ENCODE measurements at regions of chr1 and their contacts with region 1.

Region 1: GRCh38 chr1:28602536-28603439 is 10.7 kb downstream of the RAB42 start:
- DNase-seq: peak in 1 of 2 donors; percentile 47
- H3K4me3 ChIP-seq: no peak overlapping the region
- H3K27ac ChIP-seq: no peak overlapping the region
- H3K4me1 ChIP-seq: no peaks in the 10 kb centered on the region
- H3K27me3 ChIP-seq: no peaks in the 10 kb centered on the region
- CTCF ChIP-seq: peak; percentile 20 to 74 (median 68)
- POLR2A ChIP-seq: no peak

Region 2: GRCh38 chr1:27928216-27928954 is 674.4 kb before region 1 on chr1:
- intact Hi-C with region 1: no loop called
- DNase-seq: no peak
- H3K4me3 ChIP-seq: no peak overlapping the region
- H3K27ac ChIP-seq: no peak overlapping the region
- H3K4me1 ChIP-seq: no peaks in the 10 kb centered on the region
- H3K27me3 ChIP-seq: no peaks in the 10 kb centered on the region
- CTCF ChIP-seq: no peak
- POLR2A ChIP-seq: no peak

Region 3: DNA sequence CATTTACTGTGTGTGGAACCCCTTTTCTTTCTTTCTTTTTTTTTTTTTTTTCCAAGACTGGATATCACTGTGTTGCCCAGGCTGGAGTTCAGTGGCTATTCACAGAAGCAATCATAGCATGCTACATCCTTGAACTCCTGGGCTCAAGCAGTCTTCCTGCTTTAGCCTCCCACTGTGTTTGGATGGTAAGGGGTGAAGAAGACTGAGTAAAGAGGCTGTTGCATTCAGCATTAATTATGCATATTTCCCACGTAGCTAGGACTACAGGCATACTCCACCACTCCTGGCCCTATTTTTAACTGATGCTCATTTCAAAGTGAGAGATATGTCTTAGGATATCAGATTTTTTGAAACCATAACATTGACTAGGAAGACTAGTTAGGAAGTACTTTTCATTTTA is 193.7 kb before region 1 on chr1:
- intact Hi-C with region 1: loop called (anchors 10 kb)
- DNase-seq: no peak
- H3K4me3 ChIP-seq: no peak overlapping the region
- H3K27ac ChIP-seq: no peak overlapping the region
- H3K4me1 ChIP-seq: no peaks in the 10 kb centered on the region
- H3K27me3 ChIP-seq: no peaks in the 10 kb centered on the region
- CTCF ChIP-seq: no peak
- POLR2A ChIP-seq: no peak